A673 (cell line): ENCODE measurements at regions of chr10 and their contacts with region 1.

Region 1: GRCh38 chr10:101993651-101994200 is 62.2 kb downstream of the ARMH3 start:
- DNase-seq: no peak
- H3K4me3 ChIP-seq: no peak overlapping the region
- H3K27ac ChIP-seq: no peak overlapping the region
- H3K4me1 ChIP-seq: peaks cover 5% of the 10 kb centered on the region
- H3K27me3 ChIP-seq: no peaks in the 10 kb centered on the region
- CTCF ChIP-seq: no peak

Region 2: DNA sequence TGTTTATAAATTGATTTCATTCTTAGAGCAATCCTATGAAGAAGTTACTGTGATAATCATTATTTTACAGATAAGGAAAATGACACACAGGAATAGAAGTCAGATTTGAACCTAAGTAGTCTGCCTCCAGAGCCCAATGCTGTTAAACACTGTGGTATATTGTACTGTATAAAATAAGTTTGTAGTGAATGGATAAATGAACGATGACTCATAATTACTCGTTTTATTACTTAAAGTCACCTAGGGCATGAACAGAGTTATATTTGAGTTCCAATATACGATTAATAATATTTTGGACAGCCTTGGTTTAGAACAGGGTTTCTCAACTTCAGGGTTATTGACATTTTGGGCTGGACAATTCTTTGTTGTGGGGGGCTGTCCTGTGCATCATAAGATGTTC is 647.5 kb before region 1 on chr10:
- CTCF ChIA-PET with region 1: no interaction called
- POLR2A ChIA-PET with region 1: no interaction called
- intact Hi-C with region 1: no loop called
- DNase-seq: no peak
- H3K4me3 ChIP-seq: no peak overlapping the region
- H3K27ac ChIP-seq: no peak overlapping the region
- H3K4me1 ChIP-seq: no peaks in the 10 kb centered on the region
- H3K27me3 ChIP-seq: peaks cover 4% of the 10 kb centered on the region
- CTCF ChIP-seq: no peak

Region 3: DNA sequence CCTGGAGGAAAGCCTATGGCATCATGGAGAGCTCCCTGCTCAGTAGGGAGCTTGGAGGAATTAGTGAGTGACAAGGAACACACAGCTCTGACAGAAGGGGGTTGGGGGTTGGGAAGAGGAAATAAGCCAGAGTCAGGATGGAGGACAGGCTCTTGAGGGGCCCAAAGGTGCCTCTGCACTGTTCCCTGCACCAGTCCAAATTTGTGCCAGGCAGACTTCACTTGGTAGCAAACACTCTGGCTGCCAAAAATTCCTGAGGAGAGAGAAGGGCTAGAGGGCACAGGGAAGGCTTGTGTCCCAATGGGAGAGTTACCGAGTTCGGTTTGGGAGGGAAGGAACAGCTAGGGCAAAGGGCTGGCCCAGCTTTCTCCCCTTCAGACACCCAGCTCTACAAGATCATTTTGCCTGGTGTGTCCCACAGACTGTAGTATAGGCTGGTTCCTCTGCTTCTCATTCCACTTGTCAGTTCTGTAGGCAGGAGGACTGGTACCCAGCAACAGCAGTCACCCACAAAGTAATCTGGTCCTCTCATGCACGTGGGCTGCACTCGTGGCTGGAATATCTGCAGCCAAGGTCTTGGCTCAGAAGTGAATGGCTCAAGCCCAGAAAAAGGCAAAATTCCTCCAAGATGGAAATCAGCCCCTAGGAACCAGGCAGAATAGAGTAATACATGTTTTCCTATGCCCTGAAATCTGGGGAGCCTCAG is 142.2 kb before region 1 on chr10:
- CTCF ChIA-PET with region 1: no interaction called
- POLR2A ChIA-PET with region 1: interaction called, 14 read pairs
- intact Hi-C with region 1: no loop called
- DNase-seq: no peak
- H3K4me3 ChIP-seq: no peak overlapping the region
- H3K27ac ChIP-seq: no peak overlapping the region
- H3K4me1 ChIP-seq: no peaks in the 10 kb centered on the region
- H3K27me3 ChIP-seq: no peaks in the 10 kb centered on the region
- CTCF ChIP-seq: no peak

Region 4: DNA sequence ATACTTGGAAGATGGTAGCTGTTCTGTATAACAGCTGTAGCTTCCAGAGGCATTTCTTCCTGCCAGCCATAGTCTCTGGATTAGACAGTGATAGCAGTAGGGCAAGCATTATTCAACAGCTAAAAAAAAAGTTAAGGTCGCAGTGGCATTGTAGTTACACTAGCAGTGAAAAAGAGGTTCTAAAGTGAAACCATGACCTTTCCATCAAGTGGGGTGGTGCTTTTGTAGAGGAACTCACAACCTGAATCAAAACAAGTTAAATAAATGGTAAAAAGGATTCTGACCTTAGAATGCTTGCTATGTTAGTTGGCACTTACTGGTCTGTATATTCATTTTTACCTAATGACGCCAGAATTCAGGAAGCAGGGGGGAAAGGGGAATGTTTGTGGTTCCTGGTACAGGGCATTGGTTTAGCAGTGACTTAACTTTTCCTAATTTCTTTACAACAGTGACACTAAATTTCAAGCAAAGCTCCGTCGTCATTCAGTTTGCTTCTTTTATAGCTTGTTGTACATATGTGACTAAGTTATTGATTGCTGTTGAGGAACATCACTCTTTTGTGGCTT is 306.6 kb after region 1 on chr10:
- CTCF ChIA-PET with region 1: no interaction called
- POLR2A ChIA-PET with region 1: no interaction called
- intact Hi-C with region 1: no loop called
- DNase-seq: no peak
- H3K4me3 ChIP-seq: no peak overlapping the region
- H3K27ac ChIP-seq: no peak overlapping the region
- H3K4me1 ChIP-seq: no peaks in the 10 kb centered on the region
- H3K27me3 ChIP-seq: no peaks in the 10 kb centered on the region
- CTCF ChIP-seq: no peak